Psoas muscle (tissue), 8 donors: ENCODE measurements at regions of chr15 and their contacts with region 1.

Region 1: GRCh38 chr15:45611305-45611704 is 23.5 kb upstream of the SQOR start:
- DNase-seq: no peak
- ATAC-seq: no peak
- H3K4me3 ChIP-seq: no peak overlapping the region
- H3K27ac ChIP-seq: no peak overlapping the region
- H3K4me1 ChIP-seq: no peaks in the 10 kb centered on the region
- H3K27me3 ChIP-seq: no peaks in the 10 kb centered on the region
- CTCF ChIP-seq: peak; percentile 30

Region 2: GRCh38 chr15:45291822-45292582 is 319.3 kb before region 1 on chr15:
- intact Hi-C with region 1: no loop called
- DNase-seq: no peak
- ATAC-seq: peak in 3 of 4 donors; percentile 59 to 75 (median 74)
- H3K4me3 ChIP-seq: no peak overlapping the region
- H3K27ac ChIP-seq: no peak overlapping the region
- H3K4me1 ChIP-seq: peaks cover 10% of the 10 kb centered on the region
- H3K27me3 ChIP-seq: no peaks in the 10 kb centered on the region
- CTCF ChIP-seq: no peak

Region 3: DNA sequence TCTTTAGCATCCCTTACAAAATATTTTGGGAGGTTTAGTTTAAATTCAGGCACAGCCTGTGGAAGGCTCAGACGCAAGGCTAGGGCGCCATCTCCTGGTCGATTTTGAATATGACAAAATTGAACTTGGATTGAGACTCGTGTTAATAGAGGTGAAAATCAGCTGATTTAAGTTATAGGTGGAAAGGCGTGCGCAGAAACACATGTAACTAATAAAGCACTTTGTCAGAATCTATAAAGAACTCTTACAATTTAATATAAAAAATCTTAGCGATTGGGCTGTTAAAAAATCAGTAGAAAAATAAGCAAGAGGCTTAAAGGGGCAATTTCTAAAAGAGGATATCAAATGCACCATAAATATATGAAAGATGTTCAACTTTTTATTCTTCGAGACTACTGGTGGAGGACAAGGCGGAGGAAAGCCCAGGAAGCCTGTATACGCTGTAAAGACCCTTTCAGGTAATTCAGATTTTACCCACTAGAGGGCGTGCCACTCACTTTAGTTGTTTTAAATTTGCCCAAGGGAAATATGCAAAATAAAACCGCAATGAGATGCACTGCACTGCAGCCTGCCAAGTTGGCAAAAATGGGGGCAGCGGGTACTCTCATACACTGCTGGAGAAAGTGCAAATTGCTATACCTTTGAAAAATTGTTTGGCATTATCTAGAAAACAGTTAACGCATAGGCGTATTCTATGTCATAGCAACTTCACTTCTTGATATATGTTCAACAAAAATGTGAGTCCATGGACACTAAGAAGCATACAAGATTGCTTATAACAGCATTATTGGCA is 153.5 kb before region 1 on chr15:
- intact Hi-C with region 1: loop called (anchors 1 to 10 kb)
- DNase-seq: peak in 1 of 2 donors; percentile 42
- ATAC-seq: peak; percentile 84 to 93 (median 85)
- H3K4me3 ChIP-seq: peak overlapping the region; percentile 66
- H3K27ac ChIP-seq: peak overlapping the region; percentile 74
- H3K4me1 ChIP-seq: peaks cover 4% of the 10 kb centered on the region
- H3K27me3 ChIP-seq: no peaks in the 10 kb centered on the region
- CTCF ChIP-seq: peak; percentile 79

Region 4: GRCh38 chr15:45522328-45523160 is 88.8 kb before region 1 on chr15 and contains the start of gene SLC30A4:
- intact Hi-C with region 1: loop called (anchors 2 to 10 kb)
- DNase-seq: peak; percentile 78 to 82
- ATAC-seq: peak; percentile 91 to 96 (median 92)
- H3K4me3 ChIP-seq: peak within 1 kb of the TSS; percentile 94
- H3K27ac ChIP-seq: peak within 1 kb of the TSS; percentile 80
- H3K4me1 ChIP-seq: peaks cover 14% of the 10 kb centered on the region
- H3K27me3 ChIP-seq: no peaks in the 10 kb centered on the region
- CTCF ChIP-seq: peak; percentile 52
- total RNA-seq, gene SLC30A4: 1.9 to 2.2 (median 2.1) TPM

Region 5: GRCh38 chr15:45573961-45574629 is 37.2 kb before region 1 on chr15:
- intact Hi-C with region 1: no loop called
- DNase-seq: no peak
- ATAC-seq: no peak
- H3K4me3 ChIP-seq: no peak overlapping the region
- H3K27ac ChIP-seq: no peak overlapping the region
- H3K4me1 ChIP-seq: no peaks in the 10 kb centered on the region
- H3K27me3 ChIP-seq: peaks cover 0 to 4% (median 0%) of the 10 kb centered on the region in 3 donors
- CTCF ChIP-seq: no peak